CD4-positive, alpha-beta memory T cell (primary cell): ENCODE measurements at regions of chr1 and their contacts with region 1.

Region 1: GRCh38 chr1:11037740-11038182 is 9.3 kb downstream of the MASP2 start:
- DNase-seq: peak; percentile 83 to 85 (median 85)
- H3K4me3 ChIP-seq: no peak overlapping the region
- H3K4me3 Mint-ChIP-seq: no peak overlapping the region
- H3K27ac ChIP-seq: no peak overlapping the region
- H3K27ac Mint-ChIP-seq: peak overlapping the region in 2 of 7 donors; percentile 23 to 47
- H3K4me1 ChIP-seq: peaks cover 7% of the 10 kb centered on the region
- H3K4me1 Mint-ChIP-seq: peaks cover 5 to 7% (median 6%) of the 10 kb centered on the region in 4 donors
- H3K27me3 ChIP-seq: no peaks in the 10 kb centered on the region
- H3K27me3 Mint-ChIP-seq: peaks cover 2 to 6% of the 10 kb centered on the region in 2 donors

Region 2: DNA sequence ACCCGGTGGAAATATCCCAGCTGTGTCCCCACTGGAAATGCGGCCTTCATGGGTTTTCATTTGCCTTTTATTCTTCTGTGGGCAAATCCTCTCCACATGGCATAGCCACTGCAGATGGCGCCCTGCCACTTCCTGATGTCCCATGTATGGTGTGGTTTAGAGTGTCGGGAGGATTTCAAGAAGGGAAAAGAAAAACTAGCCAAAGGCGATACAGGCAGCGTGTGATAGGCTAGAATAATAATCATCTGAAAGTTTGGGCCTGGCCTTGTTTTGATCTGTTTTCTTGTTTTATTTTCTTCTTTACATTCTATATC is 439.4 kb before region 1 on chr1:
- CTCF ChIA-PET with region 1: no interaction called
- POLR2A ChIA-PET with region 1: no interaction called
- intact Hi-C with region 1: no loop called
- DNase-seq: no peak
- H3K4me3 ChIP-seq: no peak overlapping the region
- H3K4me3 Mint-ChIP-seq: no peak overlapping the region
- H3K27ac ChIP-seq: no peak overlapping the region
- H3K27ac Mint-ChIP-seq: peak overlapping the region in 1 of 7 donors; percentile 30
- H3K4me1 ChIP-seq: no peaks in the 10 kb centered on the region
- H3K4me1 Mint-ChIP-seq: no peaks in the 10 kb centered on the region
- H3K27me3 ChIP-seq: no peaks in the 10 kb centered on the region
- H3K27me3 Mint-ChIP-seq: no peaks in the 10 kb centered on the region

Region 3: DNA sequence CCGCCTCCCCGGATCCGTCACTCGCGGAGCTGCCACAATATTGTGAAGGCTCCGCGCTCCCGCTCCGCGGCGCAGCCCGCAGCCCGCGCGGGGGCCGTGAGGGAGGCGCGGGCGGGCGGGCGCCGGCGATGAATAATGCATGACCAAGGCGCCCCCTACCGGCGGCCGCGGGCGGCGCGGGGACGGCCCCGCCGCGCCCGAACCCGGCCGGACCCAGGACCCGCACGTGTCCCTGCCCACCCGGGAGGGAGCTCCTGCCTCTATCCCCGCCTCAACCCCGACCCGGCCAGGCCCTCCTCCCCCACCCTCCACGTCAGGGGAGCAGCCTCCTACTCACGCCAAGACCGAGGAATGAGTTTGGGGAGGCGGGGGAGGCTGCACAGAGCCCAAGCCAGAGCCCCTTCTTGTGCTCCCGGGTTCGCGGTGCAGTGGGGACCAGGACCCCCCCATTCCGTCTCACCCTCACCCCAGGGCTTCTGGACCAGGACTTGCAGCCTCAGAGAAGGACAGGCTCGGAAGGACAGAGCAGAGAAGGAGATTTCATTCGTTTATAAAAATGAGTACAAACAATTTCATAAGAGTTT is 170.5 kb before region 1 on chr1:
- CTCF ChIA-PET with region 1: no interaction called
- POLR2A ChIA-PET with region 1: no interaction called
- intact Hi-C with region 1: no loop called
- DNase-seq: peak; percentile 58 to 67 (median 61)
- H3K4me3 ChIP-seq: peak overlapping the region in 1 of 2 donors; percentile 34
- H3K4me3 Mint-ChIP-seq: peak overlapping the region in 4 of 8 donors; percentile 32 to 80 (median 67)
- H3K27ac ChIP-seq: no peak overlapping the region
- H3K27ac Mint-ChIP-seq: peak overlapping the region in 1 of 7 donors; percentile 29
- H3K4me1 ChIP-seq: peaks cover 13% of the 10 kb centered on the region
- H3K4me1 Mint-ChIP-seq: peaks cover 4 to 18% (median 12%) of the 10 kb centered on the region in 4 donors
- H3K27me3 ChIP-seq: peaks cover 25% of the 10 kb centered on the region
- H3K27me3 Mint-ChIP-seq: peaks cover 26 to 55% of the 10 kb centered on the region in 2 donors

Region 4: DNA sequence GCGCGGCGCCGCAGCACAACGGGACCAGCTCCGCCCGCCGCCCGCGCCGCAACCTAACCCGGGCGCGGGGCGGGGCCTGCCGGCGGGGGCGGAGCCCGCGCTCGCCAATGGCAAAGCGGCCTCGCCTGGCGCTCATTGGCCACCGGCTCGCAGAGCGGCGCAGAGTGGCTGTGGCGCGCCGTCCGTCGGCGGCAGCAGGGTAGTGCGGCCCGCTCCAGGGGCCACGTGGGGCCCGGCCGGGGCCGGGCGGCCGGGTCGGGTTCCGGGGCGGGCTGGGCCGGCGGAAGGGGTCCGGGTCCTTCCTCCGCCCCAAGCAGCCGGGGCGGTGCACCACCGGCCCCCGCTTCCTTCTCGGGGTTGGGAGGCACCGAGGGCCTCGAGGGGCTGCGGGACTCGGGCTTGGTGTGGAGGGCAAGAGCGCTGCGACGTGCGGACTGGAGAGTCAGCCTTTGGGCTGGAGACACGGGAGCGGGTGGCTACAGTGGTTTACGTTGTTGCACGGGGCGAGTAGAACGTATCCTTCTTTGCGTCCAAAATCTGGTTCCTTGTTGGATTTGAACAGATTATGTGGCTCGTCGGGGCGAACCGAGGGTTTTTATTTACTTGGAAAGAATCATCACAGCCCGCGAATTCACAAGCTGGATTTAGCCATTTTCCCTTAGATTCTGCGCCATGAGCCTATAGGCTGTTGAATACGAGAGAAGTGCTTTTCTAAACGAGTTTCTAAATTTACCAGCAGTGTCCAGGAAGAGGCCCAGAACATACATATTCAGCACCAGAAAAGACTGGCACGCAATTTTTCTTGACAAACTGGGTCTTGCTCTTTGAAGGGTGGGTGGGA is 22.4 kb after region 1 on chr1 and contains the start of gene SRM:
- CTCF ChIA-PET with region 1: interaction called, 39 read pairs
- POLR2A ChIA-PET with region 1: interaction called, 19 read pairs
- intact Hi-C with region 1: loop called (anchors 1 kb)
- DNase-seq: peak; percentile 87 to 93 (median 90)
- H3K4me3 ChIP-seq: peak within 1 kb of the TSS; percentile 57 to 76
- H3K4me3 Mint-ChIP-seq: peak within 1 kb of the TSS; percentile 92 to 96 (median 94)
- H3K27ac ChIP-seq: peak within 1 kb of the TSS; percentile 65
- H3K27ac Mint-ChIP-seq: peak within 1 kb of the TSS; percentile 86 to 96 (median 93)
- H3K4me1 ChIP-seq: peaks cover 26% of the 10 kb centered on the region
- H3K4me1 Mint-ChIP-seq: peaks cover 15 to 42% (median 30%) of the 10 kb centered on the region in 4 donors
- H3K27me3 ChIP-seq: no peaks in the 10 kb centered on the region
- H3K27me3 Mint-ChIP-seq: no peaks in the 10 kb centered on the region
- total RNA-seq, gene SRM: 53.1 to 55.1 TPM

Region 5: GRCh38 chr1:11109047-11109760 is 71.4 kb after region 1 on chr1:
- CTCF ChIA-PET with region 1: interaction called, 18 read pairs
- POLR2A ChIA-PET with region 1: no interaction called
- intact Hi-C with region 1: no loop called
- DNase-seq: no peak
- H3K4me3 ChIP-seq: no peak overlapping the region
- H3K4me3 Mint-ChIP-seq: no peak overlapping the region
- H3K27ac ChIP-seq: no peak overlapping the region
- H3K27ac Mint-ChIP-seq: no peak overlapping the region
- H3K4me1 ChIP-seq: no peaks in the 10 kb centered on the region
- H3K4me1 Mint-ChIP-seq: no peaks in the 10 kb centered on the region
- H3K27me3 ChIP-seq: no peaks in the 10 kb centered on the region
- H3K27me3 Mint-ChIP-seq: no peaks in the 10 kb centered on the region

Region 6: DNA sequence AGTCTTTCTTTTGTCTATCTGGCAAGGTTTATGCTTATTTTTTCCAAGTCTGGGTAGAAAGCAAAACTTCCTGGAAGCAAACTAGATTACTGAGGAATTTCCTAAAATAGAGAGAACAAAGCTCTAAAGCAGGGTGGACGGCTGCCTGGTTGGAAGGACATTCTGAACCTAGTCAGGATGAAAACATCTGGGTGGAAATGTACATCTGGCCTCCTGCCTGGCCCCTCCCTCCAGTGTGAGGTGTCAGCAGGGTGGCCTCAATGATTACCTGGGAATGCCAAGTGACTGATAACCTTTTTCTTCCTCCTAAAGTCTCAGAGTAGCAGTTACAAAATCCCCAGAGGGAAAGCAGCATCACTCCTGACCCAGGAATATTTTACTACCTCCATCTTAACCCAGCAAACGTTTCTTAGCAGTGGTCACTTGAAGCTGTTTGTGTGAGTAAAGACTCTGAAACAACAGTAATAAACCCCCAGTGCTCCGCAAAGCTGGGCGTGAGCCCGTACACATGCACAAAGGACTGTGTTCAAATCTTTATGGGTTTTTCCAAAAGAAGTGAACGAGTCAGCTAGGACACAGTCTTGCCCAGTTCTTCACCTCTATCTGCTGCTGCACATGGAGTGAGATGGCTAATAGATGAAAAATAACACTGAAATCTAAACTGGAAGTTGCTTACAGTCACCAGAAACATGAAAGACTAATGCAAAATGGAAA is 170.3 kb after region 1 on chr1:
- CTCF ChIA-PET with region 1: interaction called, 3 read pairs
- POLR2A ChIA-PET with region 1: no interaction called
- intact Hi-C with region 1: loop called (anchors 10 kb)
- DNase-seq: no peak
- H3K4me3 ChIP-seq: no peak overlapping the region
- H3K4me3 Mint-ChIP-seq: no peak overlapping the region
- H3K27ac ChIP-seq: no peak overlapping the region
- H3K27ac Mint-ChIP-seq: peak overlapping the region in 1 of 7 donors; percentile 22
- H3K4me1 ChIP-seq: no peaks in the 10 kb centered on the region
- H3K4me1 Mint-ChIP-seq: peaks cover 0 to 1% (median 0%) of the 10 kb centered on the region in 4 donors
- H3K27me3 ChIP-seq: no peaks in the 10 kb centered on the region
- H3K27me3 Mint-ChIP-seq: no peaks in the 10 kb centered on the region

Region 7: DNA sequence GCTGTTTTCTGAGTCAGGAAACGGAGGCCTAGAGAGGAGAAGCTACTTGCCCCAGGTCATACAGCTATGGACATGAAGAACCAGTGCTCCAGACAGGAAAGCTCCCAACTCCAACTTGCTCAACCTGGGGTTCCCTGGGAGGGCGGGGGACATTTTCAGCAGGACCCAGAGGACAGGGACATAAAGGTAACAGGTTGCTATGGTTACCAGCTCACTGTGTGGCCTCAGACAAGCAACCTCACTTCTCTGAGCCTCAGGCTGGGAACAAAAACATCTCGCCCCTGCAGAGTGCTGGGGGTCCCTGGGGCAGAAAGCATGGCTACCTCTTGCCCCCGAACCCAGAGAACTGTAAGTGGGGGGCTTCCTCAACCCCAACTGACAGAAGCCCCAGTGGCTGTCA is 600.4 kb after region 1 on chr1:
- CTCF ChIA-PET with region 1: interaction called, 129 read pairs
- POLR2A ChIA-PET with region 1: interaction called, 3 read pairs
- intact Hi-C with region 1: no loop called
- DNase-seq: no peak
- H3K4me3 ChIP-seq: no peak overlapping the region
- H3K4me3 Mint-ChIP-seq: no peak overlapping the region
- H3K27ac ChIP-seq: no peak overlapping the region
- H3K27ac Mint-ChIP-seq: no peak overlapping the region
- H3K4me1 ChIP-seq: no peaks in the 10 kb centered on the region
- H3K4me1 Mint-ChIP-seq: peaks cover 0 to 2% (median 0%) of the 10 kb centered on the region in 4 donors
- H3K27me3 ChIP-seq: peaks cover 4% of the 10 kb centered on the region
- H3K27me3 Mint-ChIP-seq: peaks cover 2 to 12% of the 10 kb centered on the region in 2 donors

Region 8: GRCh38 chr1:11813021-11813420 is 775.3 kb after region 1 on chr1:
- CTCF ChIA-PET with region 1: no interaction called
- POLR2A ChIA-PET with region 1: no interaction called
- intact Hi-C with region 1: no loop called
- DNase-seq: no peak
- H3K4me3 ChIP-seq: no peak overlapping the region
- H3K4me3 Mint-ChIP-seq: no peak overlapping the region
- H3K27ac ChIP-seq: no peak overlapping the region
- H3K27ac Mint-ChIP-seq: no peak overlapping the region
- H3K4me1 ChIP-seq: peaks cover 3% of the 10 kb centered on the region
- H3K4me1 Mint-ChIP-seq: peaks cover 5 to 11% (median 9%) of the 10 kb centered on the region in 4 donors
- H3K27me3 ChIP-seq: no peaks in the 10 kb centered on the region
- H3K27me3 Mint-ChIP-seq: no peaks in the 10 kb centered on the region